Activated B cell treated with CpG ODN at 0.5 μM for 24 hours (primary cell): ENCODE measurements at regions of chr12 and their contacts with region 1.

Region 1: GRCh38 chr12:111942557-111942956 is 70.4 kb downstream of the TMEM116 start:
- DNase-seq: no peak
- ATAC-seq: no peak
- H3K4me3 Mint-ChIP-seq: no peak overlapping the region
- H3K27ac Mint-ChIP-seq: no peak overlapping the region
- H3K4me1 Mint-ChIP-seq: peaks cover 2% of the 10 kb centered on the region
- H3K27me3 Mint-ChIP-seq: no peaks in the 10 kb centered on the region
- CTCF ChIP-seq: no peak

Region 2: GRCh38 chr12:111730420-111730819 is 212.1 kb before region 1 on chr12:
- CTCF ChIA-PET with region 1: no interaction called
- POLR2A ChIA-PET with region 1: no interaction called
- intact Hi-C with region 1: no loop called
- DNase-seq: no peak
- ATAC-seq: peak; percentile 50
- H3K4me3 Mint-ChIP-seq: no peak overlapping the region
- H3K27ac Mint-ChIP-seq: peak overlapping the region; percentile 76
- H3K4me1 Mint-ChIP-seq: peaks cover 11% of the 10 kb centered on the region
- H3K27me3 Mint-ChIP-seq: no peaks in the 10 kb centered on the region
- CTCF ChIP-seq: no peak

Region 3: DNA sequence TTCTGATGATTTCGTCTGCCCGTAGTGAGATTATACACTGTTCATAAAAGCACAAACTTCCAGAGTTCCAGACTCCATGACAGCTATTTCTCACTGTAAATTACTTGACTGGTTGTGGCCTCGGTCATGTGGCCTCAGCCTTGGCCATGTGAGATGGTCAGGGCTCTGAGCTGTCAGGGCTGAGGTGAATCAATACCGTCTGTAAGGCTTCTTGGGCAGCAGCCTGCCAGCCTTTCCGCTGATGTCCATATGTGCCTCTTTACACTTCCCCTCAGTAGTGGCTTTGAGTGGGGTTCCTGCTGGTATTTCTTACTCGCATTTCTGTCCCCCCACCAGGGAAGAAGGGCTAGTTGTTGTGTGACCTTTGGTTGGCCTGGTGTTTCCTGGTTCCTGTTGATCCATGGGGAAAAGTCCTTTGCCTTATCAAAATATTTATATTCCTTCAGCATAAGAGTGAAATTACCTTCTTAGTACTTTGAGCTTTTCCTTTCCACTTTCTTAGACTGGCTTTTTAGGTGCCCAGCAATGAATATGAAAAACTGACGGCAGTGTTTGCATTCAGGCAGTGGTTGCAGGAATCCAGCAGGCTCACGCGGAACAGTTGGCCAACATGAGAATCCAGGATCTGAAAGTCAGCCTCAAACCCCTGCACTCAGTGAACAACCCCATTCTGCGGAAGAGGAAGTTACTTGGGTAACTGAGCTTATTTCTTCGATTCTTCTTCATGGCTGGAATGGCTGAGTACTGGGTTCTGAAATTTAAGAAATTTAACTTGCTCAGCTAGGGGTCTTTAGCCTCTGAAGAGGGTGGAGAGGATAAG is 54.4 kb before region 1 on chr12:
- CTCF ChIA-PET with region 1: no interaction called
- POLR2A ChIA-PET with region 1: no interaction called
- intact Hi-C with region 1: no loop called
- DNase-seq: no peak
- ATAC-seq: no peak
- H3K4me3 Mint-ChIP-seq: no peak overlapping the region
- H3K27ac Mint-ChIP-seq: no peak overlapping the region
- H3K4me1 Mint-ChIP-seq: no peaks in the 10 kb centered on the region
- H3K27me3 Mint-ChIP-seq: no peaks in the 10 kb centered on the region
- CTCF ChIP-seq: no peak

Region 4: GRCh38 chr12:111904446-111904975 is 38.0 kb before region 1 on chr12:
- CTCF ChIA-PET with region 1: no interaction called
- POLR2A ChIA-PET with region 1: no interaction called
- intact Hi-C with region 1: no loop called
- DNase-seq: no peak
- ATAC-seq: no peak
- H3K4me3 Mint-ChIP-seq: no peak overlapping the region
- H3K27ac Mint-ChIP-seq: no peak overlapping the region
- H3K4me1 Mint-ChIP-seq: no peaks in the 10 kb centered on the region
- H3K27me3 Mint-ChIP-seq: no peaks in the 10 kb centered on the region
- CTCF ChIP-seq: no peak

Region 5: GRCh38 chr12:111993292-111994150 is 51.0 kb after region 1 on chr12:
- CTCF ChIA-PET with region 1: no interaction called
- POLR2A ChIA-PET with region 1: no interaction called
- intact Hi-C with region 1: loop called (anchors 5 kb)
- DNase-seq: no peak
- ATAC-seq: peak; percentile 37
- H3K4me3 Mint-ChIP-seq: peak overlapping the region; percentile 77
- H3K27ac Mint-ChIP-seq: no peak overlapping the region
- H3K4me1 Mint-ChIP-seq: peaks cover 46% of the 10 kb centered on the region
- H3K27me3 Mint-ChIP-seq: peaks cover 11% of the 10 kb centered on the region
- CTCF ChIP-seq: no peak

Region 6: GRCh38 chr12:112025808-112026375 is 83.3 kb after region 1 on chr12:
- CTCF ChIA-PET with region 1: interaction called, 3 read pairs
- POLR2A ChIA-PET with region 1: interaction called, 5 read pairs
- intact Hi-C with region 1: loop called (anchors 5 kb)
- DNase-seq: no peak
- ATAC-seq: peak; percentile 56
- H3K4me3 Mint-ChIP-seq: peak overlapping the region; percentile 40
- H3K27ac Mint-ChIP-seq: peak overlapping the region; percentile 77
- H3K4me1 Mint-ChIP-seq: peaks cover 25% of the 10 kb centered on the region
- H3K27me3 Mint-ChIP-seq: no peaks in the 10 kb centered on the region
- CTCF ChIP-seq: no peak

Region 7: GRCh38 chr12:112170376-112170775 is 227.8 kb after region 1 on chr12:
- CTCF ChIA-PET with region 1: interaction called, 4 read pairs
- POLR2A ChIA-PET with region 1: no interaction called
- intact Hi-C with region 1: loop called (anchors 1 kb)
- DNase-seq: no peak
- ATAC-seq: peak; percentile 66
- H3K4me3 Mint-ChIP-seq: no peak overlapping the region
- H3K27ac Mint-ChIP-seq: no peak overlapping the region
- H3K4me1 Mint-ChIP-seq: peaks cover 6% of the 10 kb centered on the region
- H3K27me3 Mint-ChIP-seq: no peaks in the 10 kb centered on the region
- CTCF ChIP-seq: no peak

Region 8: GRCh38 chr12:112409064-112409905 is 466.7 kb after region 1 on chr12 and contains the start of gene RPL6:
- CTCF ChIA-PET with region 1: no interaction called
- POLR2A ChIA-PET with region 1: no interaction called
- intact Hi-C with region 1: loop called (anchors 1 kb)
- DNase-seq: peak; percentile 70
- ATAC-seq: peak; percentile 91
- H3K4me3 Mint-ChIP-seq: peak within 1 kb of the TSS; percentile 100
- H3K27ac Mint-ChIP-seq: peak within 1 kb of the TSS; percentile 99
- H3K4me1 Mint-ChIP-seq: peaks cover 36% of the 10 kb centered on the region
- H3K27me3 Mint-ChIP-seq: no peaks in the 10 kb centered on the region
- CTCF ChIP-seq: no peak
- total RNA-seq, gene RPL6: 2,197 and 2,546 TPM in 2 replicates